GM12878 (cell line): ENCODE measurements at regions of chr5 and their contacts with region 1.

Region 1: DNA sequence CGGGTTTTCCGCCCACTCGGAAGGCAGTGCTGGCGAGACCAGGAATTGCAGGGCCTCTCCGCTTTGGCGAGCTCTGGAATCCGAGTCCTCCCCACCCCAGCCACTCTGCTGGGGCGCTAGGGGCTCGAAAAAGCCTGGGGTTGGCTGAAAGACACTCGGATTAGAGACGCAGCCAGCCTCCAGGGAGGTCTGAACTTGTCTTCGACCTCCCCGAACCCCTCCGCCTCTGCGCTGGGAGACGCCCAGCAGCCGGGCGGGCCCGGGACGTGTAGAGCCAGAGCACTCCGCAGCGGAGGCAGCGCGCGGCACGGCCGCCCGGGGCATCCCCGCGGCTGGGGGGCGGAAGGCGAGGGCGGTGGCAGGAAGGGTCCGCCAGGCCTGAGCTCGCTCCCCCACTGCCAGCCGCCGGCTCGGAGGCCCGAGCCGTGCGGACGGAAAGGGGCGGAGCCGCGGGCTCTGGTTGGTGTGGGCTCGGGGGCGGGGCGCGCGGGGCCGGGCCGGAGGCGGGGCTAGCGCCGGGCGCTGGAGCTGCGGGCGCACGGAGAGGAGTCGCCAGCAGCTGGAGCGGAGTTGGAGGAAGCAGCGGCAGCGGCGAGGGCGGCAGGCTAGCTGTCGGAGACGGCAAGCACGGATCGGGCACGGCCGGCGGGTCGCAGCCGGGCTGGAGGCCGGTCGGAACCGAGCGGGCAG is at the start of gene PIK3R1:
- DNase-seq: peak; percentile 74
- ATAC-seq: peak; percentile 87
- H3K4me3 ChIP-seq: peak within 1 kb of the TSS; percentile 93
- H3K27ac ChIP-seq: peak within 1 kb of the TSS; percentile 82
- H3K4me1 ChIP-seq: peaks cover 4% of the 10 kb centered on the region; the same call in 1 of the 2 replicates
- H3K27me3 ChIP-seq: no peaks in the 10 kb centered on the region
- CTCF ChIP-seq: peak in 2 of 3 experiments; percentile 26; a peak in 2 of 6 replicates
- EP300 ChIP-seq: 0 out of 4 replicates have a peak, but pooled peaks of 1 of the 2 experiments have one; percentile 31
- POLR2A ChIP-seq: peak; percentile 94
- RAD21 ChIP-seq: peak; percentile 25; the same call in 1 of the 2 replicates
- polyA plus RNA-seq, gene PIK3R1: 7.8 to 8.0 TPM

Region 2: GRCh38 chr5:67623078-67623477 is 592.3 kb before region 1 on chr5:
- CTCF ChIA-PET with region 1: no interaction called
- POLR2A ChIA-PET with region 1: no interaction called
- RAD21 ChIA-PET with region 1: no interaction called
- SMC1A ChIA-PET with region 1: no interaction called
- in situ Hi-C with region 1: no loop called
- intact Hi-C with region 1: no loop called
- DNase-seq: no peak
- ATAC-seq: no peak
- H3K4me3 ChIP-seq: no peak overlapping the region
- H3K27ac ChIP-seq: no peak overlapping the region
- H3K4me1 ChIP-seq: no peaks in the 10 kb centered on the region
- H3K27me3 ChIP-seq: no peaks in the 10 kb centered on the region
- CTCF ChIP-seq: no peak
- EP300 ChIP-seq: no peak
- POLR2A ChIP-seq: no peak
- RAD21 ChIP-seq: no peak

Region 3: DNA sequence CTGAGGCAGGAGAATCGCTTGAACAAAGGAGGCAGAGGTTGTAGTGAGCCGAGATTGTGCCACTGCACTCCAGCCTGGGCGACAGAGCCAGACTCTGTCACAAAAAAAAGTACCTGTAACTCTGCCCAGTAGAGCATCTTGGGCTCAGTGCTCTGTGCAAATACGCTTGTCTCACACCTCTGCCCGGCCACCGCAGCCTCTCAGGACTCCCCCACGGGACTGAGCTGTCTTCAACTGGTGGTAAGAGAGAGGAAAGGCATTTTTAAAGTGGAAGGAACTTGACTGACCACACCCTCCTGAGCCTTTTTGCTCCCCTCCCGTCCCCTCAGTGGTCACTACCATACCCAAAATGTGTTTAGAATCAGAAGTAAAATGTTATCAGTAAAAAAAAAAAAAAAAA is 174.1 kb before region 1 on chr5:
- CTCF ChIA-PET with region 1: no interaction called
- POLR2A ChIA-PET with region 1: interaction called, 3 read pairs
- RAD21 ChIA-PET with region 1: interaction called, 5 read pairs
- SMC1A ChIA-PET with region 1: no interaction called
- in situ Hi-C with region 1: no loop called
- intact Hi-C with region 1: loop called (anchors 2 kb)
- DNase-seq: peak; percentile 56
- ATAC-seq: peak; percentile 98
- H3K4me3 ChIP-seq: no peak overlapping the region
- H3K27ac ChIP-seq: no peak overlapping the region
- H3K4me1 ChIP-seq: peaks cover 19% of the 10 kb centered on the region
- H3K27me3 ChIP-seq: no peaks in the 10 kb centered on the region
- CTCF ChIP-seq: no peak
- EP300 ChIP-seq: peak in 1 of 2 experiments; percentile 24; a peak in 1 of 4 replicates
- POLR2A ChIP-seq: no peak
- RAD21 ChIP-seq: no peak

Region 4: GRCh38 chr5:68141494-68141893 is 73.9 kb before region 1 on chr5:
- CTCF ChIA-PET with region 1: interaction called, 4 read pairs
- POLR2A ChIA-PET with region 1: interaction called, 5 read pairs
- RAD21 ChIA-PET with region 1: interaction called, 10 read pairs
- SMC1A ChIA-PET with region 1: interaction called, 7 read pairs
- in situ Hi-C with region 1: no loop called
- intact Hi-C with region 1: loop called (anchors 2 kb)
- DNase-seq: peak; percentile 55
- ATAC-seq: peak; percentile 83
- H3K4me3 ChIP-seq: no peak overlapping the region
- H3K27ac ChIP-seq: peak overlapping the region; percentile 78
- H3K4me1 ChIP-seq: peaks cover 41% of the 10 kb centered on the region
- H3K27me3 ChIP-seq: no peaks in the 10 kb centered on the region
- CTCF ChIP-seq: no peak
- EP300 ChIP-seq: no peak
- POLR2A ChIP-seq: no peak
- RAD21 ChIP-seq: no peak

Region 5: DNA sequence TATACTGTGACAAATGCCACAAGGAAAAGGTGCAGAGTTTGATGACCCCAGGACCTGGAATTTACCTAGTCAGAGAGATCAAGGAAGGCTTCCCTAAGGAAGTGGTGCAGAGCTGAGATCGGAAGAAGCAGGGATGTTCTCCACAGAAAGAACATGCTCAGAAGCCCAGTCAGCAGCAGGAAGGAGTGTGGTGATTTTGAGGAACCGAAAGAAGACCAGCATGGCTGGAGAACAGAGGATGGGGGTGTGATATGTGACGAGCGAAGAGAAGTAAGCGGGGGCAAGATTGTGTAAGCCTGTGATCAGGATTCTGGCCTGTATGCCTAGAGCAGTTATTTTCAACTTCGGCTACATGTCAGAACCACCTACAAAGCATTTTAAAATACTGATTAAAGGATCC is 18.5 kb before region 1 on chr5:
- CTCF ChIA-PET with region 1: interaction called, 3 read pairs
- POLR2A ChIA-PET with region 1: interaction called, 8 read pairs
- RAD21 ChIA-PET with region 1: interaction called, 5 read pairs
- SMC1A ChIA-PET with region 1: interaction called, 17 read pairs
- in situ Hi-C with region 1: no loop called
- intact Hi-C with region 1: loop called (anchors 2 kb)
- DNase-seq: peak; percentile 67
- ATAC-seq: peak; percentile 97
- H3K4me3 ChIP-seq: no peak overlapping the region
- H3K27ac ChIP-seq: no peak overlapping the region
- H3K4me1 ChIP-seq: peaks cover 18% of the 10 kb centered on the region
- H3K27me3 ChIP-seq: no peaks in the 10 kb centered on the region
- CTCF ChIP-seq: no peak
- EP300 ChIP-seq: peak; percentile 50 to 73; a peak in 3 of 4 replicates
- POLR2A ChIP-seq: no peak
- RAD21 ChIP-seq: no peak; the same call in 1 of the 2 replicates

Region 6: GRCh38 chr5:68239487-68239886 is 24.1 kb after region 1 on chr5:
- CTCF ChIA-PET with region 1: interaction called, 16 read pairs
- POLR2A ChIA-PET with region 1: interaction called, 5 read pairs
- RAD21 ChIA-PET with region 1: interaction called, 18 read pairs
- SMC1A ChIA-PET with region 1: interaction called, 25 read pairs
- in situ Hi-C with region 1: no loop called
- intact Hi-C with region 1: loop called (anchors 2 kb)
- DNase-seq: no peak
- ATAC-seq: peak; percentile 94
- H3K4me3 ChIP-seq: no peak overlapping the region
- H3K27ac ChIP-seq: no peak overlapping the region; the same call in 1 of the 2 replicates
- H3K4me1 ChIP-seq: peaks cover 19% of the 10 kb centered on the region; the same call in 1 of the 2 replicates
- H3K27me3 ChIP-seq: no peaks in the 10 kb centered on the region
- CTCF ChIP-seq: no peak
- EP300 ChIP-seq: peak in 1 of 2 experiments; percentile 42; a peak in 1 of 4 replicates
- POLR2A ChIP-seq: no peak
- RAD21 ChIP-seq: no peak

Region 7: DNA sequence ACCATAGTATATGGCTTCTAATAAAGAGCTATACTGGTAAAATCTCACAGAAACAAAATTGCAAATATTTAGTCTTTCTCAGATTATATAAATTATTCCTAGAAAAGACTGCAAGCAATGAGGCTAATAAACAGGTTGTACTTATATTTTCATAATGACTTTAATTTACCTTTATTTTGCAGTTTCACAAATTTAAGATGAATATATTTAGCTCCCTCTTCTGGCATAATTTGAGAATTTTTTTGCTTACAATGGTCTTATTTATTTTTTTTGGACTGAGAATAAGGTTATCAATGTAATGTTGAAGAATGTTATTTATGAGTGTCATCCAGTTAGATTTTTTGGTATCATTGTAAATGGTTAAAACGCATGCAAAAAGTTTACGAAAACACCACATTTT is 56.9 kb after region 1 on chr5:
- CTCF ChIA-PET with region 1: interaction called, 21 read pairs
- POLR2A ChIA-PET with region 1: interaction called, 3 read pairs
- RAD21 ChIA-PET with region 1: interaction called, 15 read pairs
- SMC1A ChIA-PET with region 1: interaction called, 18 read pairs
- in situ Hi-C with region 1: no loop called
- intact Hi-C with region 1: no loop called
- DNase-seq: no peak
- ATAC-seq: no peak
- H3K4me3 ChIP-seq: no peak overlapping the region
- H3K27ac ChIP-seq: no peak overlapping the region
- H3K4me1 ChIP-seq: peaks cover 34% of the 10 kb centered on the region
- H3K27me3 ChIP-seq: no peaks in the 10 kb centered on the region
- CTCF ChIP-seq: peak in 1 of 3 experiments; percentile 11; a peak in 1 of 6 replicates
- EP300 ChIP-seq: no peak
- POLR2A ChIP-seq: no peak
- RAD21 ChIP-seq: no peak